ENCODE measurements at regions of chr12 and their contacts with region 1.

Region 1: GRCh38 chr12:67268896-67269631 is at the start of gene CAND1:
- DNase-seq: peak; percentile 97
- ATAC-seq: peak; percentile 82
- H3K4me3 Mint-ChIP-seq: peak within 1 kb of the TSS; percentile 98
- H3K27ac Mint-ChIP-seq: peak within 1 kb of the TSS; percentile 100
- H3K4me1 Mint-ChIP-seq: peaks cover 31% of the 10 kb centered on the region
- H3K27me3 Mint-ChIP-seq: no peaks in the 10 kb centered on the region
- total RNA-seq, gene CAND1: 158 to 224 TPM

Region 2: DNA sequence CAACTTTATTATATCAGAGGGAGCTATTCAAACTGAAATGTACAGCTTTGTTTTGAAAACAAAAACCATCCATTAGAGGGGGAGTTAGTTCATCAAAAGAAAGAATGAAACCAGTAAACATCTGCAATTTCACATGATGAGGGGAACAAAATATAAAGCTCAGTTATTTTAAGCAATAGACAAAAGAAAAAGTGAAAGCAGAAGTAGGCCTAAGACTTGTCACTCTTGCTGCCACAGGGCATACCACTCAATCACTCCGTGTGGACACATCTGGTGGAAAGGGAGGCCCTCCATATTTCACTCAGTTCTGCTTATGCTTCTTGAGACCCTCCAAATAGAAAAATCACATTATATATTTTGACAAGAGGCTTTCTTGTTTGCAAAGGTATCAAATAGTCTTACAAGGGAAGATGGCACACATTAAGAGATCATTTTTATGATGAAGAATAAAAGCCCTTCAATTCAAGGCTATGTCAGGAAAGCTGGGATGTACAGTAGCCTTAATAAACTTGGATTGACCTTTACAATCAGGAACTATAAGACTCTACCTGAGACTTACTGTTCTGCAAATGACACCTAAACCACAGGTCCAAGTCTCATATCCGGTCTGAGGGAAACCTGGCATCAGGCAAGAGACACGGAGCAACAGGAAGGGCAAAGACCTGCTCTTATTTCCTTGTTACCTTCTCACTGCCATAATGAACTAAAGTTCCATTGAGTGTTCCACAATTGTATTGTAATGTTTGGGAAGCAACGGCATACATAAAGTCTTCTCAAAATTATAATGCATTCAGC is 367.7 kb before region 1 on chr12:
- CTCF ChIA-PET with region 1: no interaction called
- POLR2A ChIA-PET with region 1: no interaction called
- intact Hi-C with region 1: loop called in 1 of 2 experiments (anchors 10 kb)
- DNase-seq: peak; percentile 11
- ATAC-seq: peak; percentile 74
- H3K4me3 Mint-ChIP-seq: no peak overlapping the region
- H3K27ac Mint-ChIP-seq: peak overlapping the region; percentile 47
- H3K4me1 Mint-ChIP-seq: peaks cover 36% of the 10 kb centered on the region
- H3K27me3 Mint-ChIP-seq: peaks cover 1% of the 10 kb centered on the region

Region 3: DNA sequence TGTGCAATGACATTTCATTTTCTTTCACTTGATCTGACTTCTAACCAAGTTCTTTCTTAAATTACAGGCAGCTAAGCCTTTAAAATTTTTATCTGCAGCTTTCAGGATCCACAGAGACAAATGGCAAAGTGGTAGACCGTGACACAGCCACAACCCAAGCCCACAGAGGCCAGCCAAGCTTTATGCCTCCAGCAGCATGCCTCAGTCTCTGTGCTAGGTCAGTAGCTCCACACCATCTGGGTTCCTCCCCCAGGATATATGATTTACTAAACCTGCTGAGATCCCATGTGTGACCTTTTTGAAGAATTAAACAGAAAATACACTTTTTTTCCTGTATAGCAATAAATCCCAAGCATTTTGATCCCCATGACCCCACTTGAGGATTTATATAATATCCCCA is 290.3 kb before region 1 on chr12:
- CTCF ChIA-PET with region 1: no interaction called
- POLR2A ChIA-PET with region 1: interaction called, 13 read pairs
- intact Hi-C with region 1: no loop called
- DNase-seq: no peak
- ATAC-seq: peak; percentile 35
- H3K4me3 Mint-ChIP-seq: no peak overlapping the region
- H3K27ac Mint-ChIP-seq: no peak overlapping the region
- H3K4me1 Mint-ChIP-seq: peaks cover 10% of the 10 kb centered on the region
- H3K27me3 Mint-ChIP-seq: no peaks in the 10 kb centered on the region

Region 4: GRCh38 chr12:67068761-67069450 is 200.2 kb before region 1 on chr12:
- CTCF ChIA-PET with region 1: interaction called, 3 read pairs
- POLR2A ChIA-PET with region 1: interaction called, 6 read pairs
- intact Hi-C with region 1: loop called (anchors 1 to 2 kb)
- DNase-seq: peak; percentile 67
- ATAC-seq: peak; percentile 63
- H3K4me3 Mint-ChIP-seq: peak overlapping the region; percentile 80
- H3K27ac Mint-ChIP-seq: no peak overlapping the region
- H3K4me1 Mint-ChIP-seq: peaks cover 18% of the 10 kb centered on the region
- H3K27me3 Mint-ChIP-seq: peaks cover 33% of the 10 kb centered on the region

Region 5: GRCh38 chr12:67315661-67316060 is 46.6 kb after region 1 on chr12:
- CTCF ChIA-PET with region 1: interaction called, 7 read pairs
- POLR2A ChIA-PET with region 1: interaction called, 5 read pairs
- intact Hi-C with region 1: loop called in 1 of 2 experiments (anchors 5 kb)
- DNase-seq: no peak
- ATAC-seq: no peak
- H3K4me3 Mint-ChIP-seq: no peak overlapping the region
- H3K27ac Mint-ChIP-seq: no peak overlapping the region
- H3K4me1 Mint-ChIP-seq: peaks cover 5% of the 10 kb centered on the region
- H3K27me3 Mint-ChIP-seq: no peaks in the 10 kb centered on the region

Region 6: DNA sequence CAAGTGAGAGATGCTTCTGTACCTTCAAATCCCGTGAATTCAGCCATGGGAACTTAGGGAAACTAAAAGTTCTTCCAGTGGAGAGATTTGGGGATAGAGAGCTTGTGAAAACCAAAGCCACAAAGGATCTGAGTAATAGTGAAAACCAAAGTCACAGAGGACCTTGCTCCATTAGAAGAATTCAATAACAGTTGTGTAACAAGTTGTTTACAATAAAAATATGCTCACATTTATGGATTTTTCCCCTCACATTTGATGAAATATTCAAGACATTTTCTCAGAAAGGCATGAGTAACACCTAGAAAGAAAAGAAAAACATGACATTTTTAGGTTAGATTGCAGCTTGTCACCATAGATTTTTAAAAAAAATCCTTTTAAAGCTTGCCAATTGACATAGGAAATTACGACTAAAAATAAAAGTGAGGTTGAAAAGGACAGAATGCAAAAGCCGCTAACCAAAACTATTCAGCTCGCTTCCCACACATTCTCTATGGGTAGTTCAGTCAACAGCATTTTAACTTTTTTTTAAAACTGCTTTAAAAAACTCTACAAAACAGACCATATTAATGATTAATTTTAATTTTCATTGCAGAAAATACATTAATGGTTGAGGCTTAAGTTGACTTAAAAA is 113.3 kb after region 1 on chr12:
- CTCF ChIA-PET with region 1: no interaction called
- POLR2A ChIA-PET with region 1: no interaction called
- intact Hi-C with region 1: no loop called
- DNase-seq: no peak
- ATAC-seq: no peak
- H3K4me3 Mint-ChIP-seq: no peak overlapping the region
- H3K27ac Mint-ChIP-seq: no peak overlapping the region
- H3K4me1 Mint-ChIP-seq: peaks cover 4% of the 10 kb centered on the region
- H3K27me3 Mint-ChIP-seq: peaks cover 2% of the 10 kb centered on the region